Sciatic nerve (tissue), 2 donors: ENCODE measurements at regions of chr16 and their contacts with region 1.

Region 1: DNA sequence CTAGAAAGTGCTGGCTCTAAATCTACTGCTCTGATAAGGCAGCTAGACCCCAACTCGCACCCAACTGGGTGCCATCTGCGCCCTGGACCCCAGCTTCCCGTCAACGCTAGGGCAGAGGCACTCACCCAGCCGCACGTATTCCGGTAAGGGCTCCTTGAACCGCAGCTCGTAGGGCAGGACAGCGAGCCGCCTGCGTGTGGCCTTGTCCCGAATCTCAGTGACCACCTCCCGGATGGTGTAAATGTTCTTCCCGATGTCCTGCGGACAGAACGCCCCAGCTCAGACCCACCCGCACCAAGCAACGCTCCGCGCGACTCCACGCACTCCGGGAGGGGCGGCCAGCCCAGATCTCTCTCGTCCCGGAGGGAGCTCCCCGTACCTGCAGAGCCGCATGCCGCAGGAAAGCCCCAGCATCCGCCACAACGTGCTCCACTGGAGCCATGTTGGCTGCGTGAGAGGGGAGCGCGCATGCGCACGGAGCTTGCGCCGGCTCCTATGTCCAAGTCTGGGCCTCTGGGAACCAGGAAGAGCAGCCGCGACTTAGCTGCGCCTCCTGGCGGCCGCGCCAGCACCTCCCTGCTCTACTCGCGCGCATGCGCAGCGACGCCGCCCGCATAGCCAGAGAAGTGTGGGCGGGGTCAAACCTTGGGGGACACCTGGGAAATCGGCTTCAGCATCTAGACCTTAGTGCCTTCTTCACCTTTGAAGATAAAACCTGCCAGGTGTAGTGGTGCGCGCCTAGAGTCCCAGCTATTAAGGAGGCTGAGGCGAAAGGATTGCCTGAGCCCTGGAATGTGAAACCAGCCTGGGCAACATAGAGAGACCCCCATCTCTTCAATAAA is at the start of gene NOB1:
- DNase-seq: peak; percentile 98
- ATAC-seq: peak; percentile 99
- total RNA-seq, gene NOB1: 32.6 TPM

Region 2: GRCh38 chr16:69396187-69397061 is 358.3 kb before region 1 on chr16:
- intact Hi-C with region 1: loop called (anchors 10 kb)
- DNase-seq: peak; percentile 87
- ATAC-seq: peak; percentile 92

Region 3: DNA sequence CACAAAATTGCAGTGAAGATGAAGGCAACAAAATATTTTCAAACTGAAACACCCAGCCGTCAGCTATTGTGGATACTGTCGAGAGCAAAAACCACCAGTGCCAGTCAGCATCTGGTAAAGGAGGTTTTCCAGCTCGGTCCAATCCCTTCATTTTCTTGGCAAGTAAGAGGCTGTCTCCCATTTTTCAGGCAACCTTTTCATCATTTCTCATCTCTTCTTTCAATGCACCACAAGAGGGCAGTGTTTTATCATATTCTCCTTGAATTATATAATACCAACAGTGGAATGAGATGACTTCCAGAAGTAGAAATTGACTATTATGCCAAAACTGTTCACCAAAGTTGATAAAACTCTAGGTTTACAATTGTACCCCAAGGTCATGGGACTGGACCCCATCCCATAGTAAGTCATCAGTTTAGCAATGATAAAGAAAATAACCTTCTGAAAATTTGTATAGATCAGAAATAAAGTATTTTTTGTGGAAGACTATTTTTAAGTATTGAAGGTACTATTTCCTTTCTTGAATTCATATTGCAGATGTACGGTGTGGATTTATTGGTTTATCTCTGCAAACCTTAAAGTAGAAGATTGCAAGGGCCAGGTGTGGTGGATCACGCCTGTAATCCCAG is 45.1 kb before region 1 on chr16:
- intact Hi-C with region 1: loop called (anchors 2 kb)
- DNase-seq: no peak
- ATAC-seq: peak; percentile 59